Aorta (tissue), 5 donors: ENCODE measurements at regions of chr11 and their contacts with region 1.

Region 1: GRCh38 chr11:45964911-45965389 is 42.5 kb downstream of the LARGE2 start:
- DNase-seq: peak in 1 of 2 donors; percentile 62
- ATAC-seq: peak; percentile 91
- H3K4me3 ChIP-seq: no peak overlapping the region
- H3K27ac ChIP-seq: no peak overlapping the region
- H3K4me1 ChIP-seq: no peaks in the 10 kb centered on the region
- H3K27me3 ChIP-seq: no peaks in the 10 kb centered on the region

Region 2: GRCh38 chr11:46006418-46007070 is 41.6 kb after region 1 on chr11:
- intact Hi-C with region 1: loop called (anchors 1 kb)
- DNase-seq: no peak
- ATAC-seq: no peak
- H3K4me3 ChIP-seq: no peak overlapping the region
- H3K27ac ChIP-seq: no peak overlapping the region
- H3K4me1 ChIP-seq: peaks cover 0 to 3% of the 10 kb centered on the region in 2 donors
- H3K27me3 ChIP-seq: no peaks in the 10 kb centered on the region